H1 (cell line): ENCODE measurements at regions of chr12 and their contacts with region 1.

Region 1: DNA sequence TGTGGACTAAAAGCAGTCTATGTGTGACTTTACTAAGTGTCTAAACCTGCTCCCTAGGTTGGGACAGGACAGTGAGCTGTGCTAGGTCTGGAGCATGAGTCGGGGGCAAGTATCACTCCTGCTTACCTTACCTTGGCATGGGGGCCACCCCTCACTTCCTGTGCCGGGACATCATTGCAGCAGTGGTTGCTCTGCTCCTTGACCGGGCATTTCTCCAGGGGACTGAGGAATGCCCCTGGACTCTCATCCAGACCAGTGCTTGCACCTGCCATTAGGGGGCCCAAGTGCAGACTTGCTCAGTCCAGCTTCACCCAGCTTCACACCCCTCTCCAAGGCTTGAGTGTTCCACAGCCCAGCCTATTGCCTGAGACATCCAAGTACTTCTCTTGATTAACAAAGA is 84.7 kb upstream of the NELL2 start:
- DNase-seq: peak in 1 of 2 experiments; percentile 61
- H3K4me3 ChIP-seq: no peak overlapping the region; a peak in 1 of 8 replicates
- H3K27ac ChIP-seq: no peak overlapping the region
- H3K4me1 ChIP-seq: peaks cover 2 to 8% (median 5%) of the 10 kb centered on the region in 4 experiments; a peak in 6 of 7 replicates
- H3K27me3 ChIP-seq: no peaks in the 10 kb centered on the region
- CTCF ChIP-seq: peak; percentile 53 to 70 (median 70)
- EP300 ChIP-seq: no peak
- POLR2A ChIP-seq: no peak
- RAD21 ChIP-seq: peak; percentile 28 to 52; a peak in 3 of 4 replicates

Region 2: DNA sequence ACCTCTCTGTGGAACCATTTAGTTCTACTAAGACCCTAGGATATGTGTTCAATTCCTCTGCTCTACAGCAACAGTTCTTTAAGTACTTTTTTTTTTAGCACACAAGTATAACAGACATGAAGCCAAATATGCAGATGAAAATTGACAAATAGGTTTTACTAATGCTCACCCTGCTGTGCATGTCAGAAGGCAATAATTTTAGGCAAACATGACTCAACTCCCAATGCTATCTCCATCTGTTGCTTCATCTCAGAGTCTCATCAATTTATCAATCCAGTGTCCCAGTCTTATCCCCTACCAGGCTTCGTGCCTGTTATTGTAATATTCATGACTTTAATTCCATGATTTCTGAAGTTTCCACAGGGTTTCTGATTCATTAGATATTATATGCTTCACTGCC is 32.3 kb after region 1 on chr12:
- CTCF ChIA-PET with region 1: no interaction called
- POLR2A ChIA-PET with region 1: no interaction called
- DNase-seq: no peak
- H3K4me3 ChIP-seq: no peak overlapping the region
- H3K27ac ChIP-seq: no peak overlapping the region
- H3K4me1 ChIP-seq: no peaks in the 10 kb centered on the region
- H3K27me3 ChIP-seq: no peaks in the 10 kb centered on the region
- CTCF ChIP-seq: no peak
- EP300 ChIP-seq: no peak
- POLR2A ChIP-seq: no peak
- RAD21 ChIP-seq: no peak

Region 3: GRCh38 chr12:45122768-45123380 is 162.0 kb after region 1 on chr12:
- CTCF ChIA-PET with region 1: interaction called, 10 read pairs
- POLR2A ChIA-PET with region 1: no interaction called
- DNase-seq: no peak
- H3K4me3 ChIP-seq: no peak overlapping the region
- H3K27ac ChIP-seq: no peak overlapping the region
- H3K4me1 ChIP-seq: no peaks in the 10 kb centered on the region
- H3K27me3 ChIP-seq: no peaks in the 10 kb centered on the region
- CTCF ChIP-seq: peak in 2 of 3 experiments; percentile 60 to 71; a peak in 3 of 4 replicates
- EP300 ChIP-seq: no peak
- POLR2A ChIP-seq: no peak
- RAD21 ChIP-seq: peak; percentile 85 to 88

Region 4: GRCh38 chr12:45170456-45171042 is 209.7 kb after region 1 on chr12:
- CTCF ChIA-PET with region 1: no interaction called
- POLR2A ChIA-PET with region 1: no interaction called
- DNase-seq: peak; percentile 39 to 94
- H3K4me3 ChIP-seq: no peak overlapping the region
- H3K27ac ChIP-seq: no peak overlapping the region
- H3K4me1 ChIP-seq: no peaks in the 10 kb centered on the region
- H3K27me3 ChIP-seq: no peaks in the 10 kb centered on the region
- CTCF ChIP-seq: peak; percentile 78 to 89 (median 82)
- EP300 ChIP-seq: no peak
- POLR2A ChIP-seq: no peak
- RAD21 ChIP-seq: peak; percentile 85 to 87